T-cell (primary cell): ENCODE measurements at regions of chr3 and their contacts with region 1.

Region 1: DNA sequence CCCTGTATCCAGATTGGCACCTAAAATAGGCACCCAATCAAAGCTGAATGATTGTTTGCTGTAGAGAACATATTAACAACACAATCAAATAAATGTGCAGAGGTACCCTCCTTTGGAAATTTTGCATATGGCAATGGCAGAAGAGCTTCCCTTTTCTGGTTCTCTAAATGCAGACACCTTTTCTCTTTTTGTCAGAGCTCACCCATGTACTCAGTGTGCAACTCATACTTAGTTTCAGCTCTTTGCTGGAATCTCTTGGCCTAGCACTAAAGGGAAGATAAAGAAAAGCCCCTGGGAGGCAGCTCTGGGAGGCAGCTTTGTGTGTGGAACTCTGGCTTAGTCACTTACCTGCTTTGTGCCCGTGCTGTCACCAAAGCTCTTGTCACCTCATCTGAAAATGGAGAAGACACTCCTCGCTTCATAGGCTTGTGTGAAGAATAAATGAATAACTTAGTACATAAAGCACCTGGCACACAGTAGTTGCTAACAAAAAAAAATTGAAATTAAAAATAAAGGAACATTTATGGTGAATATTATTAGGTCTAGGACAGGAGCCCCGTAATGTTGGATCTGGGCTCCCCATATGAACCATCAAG is 28.8 kb downstream of the ST6GAL1 start:
- DNase-seq: no peak
- ATAC-seq: no peak
- H3K4me3 ChIP-seq: no peak overlapping the region
- H3K4me3 Mint-ChIP-seq: no peak overlapping the region
- H3K27ac ChIP-seq: no peak overlapping the region
- H3K27ac Mint-ChIP-seq: peak overlapping the region; percentile 5 to 52
- H3K4me1 ChIP-seq: peaks cover 0 to 36% of the 10 kb centered on the region in 2 experiments
- H3K4me1 Mint-ChIP-seq: peaks cover 65 to 85% (median 79%) of the 10 kb centered on the region in 3 donors
- H3K27me3 ChIP-seq: no peaks in the 10 kb centered on the region
- H3K27me3 Mint-ChIP-seq: no peaks in the 10 kb centered on the region

Region 2: GRCh38 chr3:187000711-187001151 is 41.6 kb after region 1 on chr3:
- CTCF ChIA-PET with region 1: no interaction called
- POLR2A ChIA-PET with region 1: interaction called in 1 of 2 experiments, 10 read pairs
- DNase-seq: peak in 1 of 35 experiments; percentile 11
- ATAC-seq: no peak
- H3K4me3 ChIP-seq: no peak overlapping the region
- H3K4me3 Mint-ChIP-seq: no peak overlapping the region
- H3K27ac ChIP-seq: peak overlapping the region; percentile 51
- H3K27ac Mint-ChIP-seq: peak overlapping the region; percentile 83 to 87
- H3K4me1 ChIP-seq: peaks cover 0 to 39% of the 10 kb centered on the region in 2 experiments
- H3K4me1 Mint-ChIP-seq: peaks cover 54 to 75% (median 74%) of the 10 kb centered on the region in 3 donors
- H3K27me3 ChIP-seq: no peaks in the 10 kb centered on the region
- H3K27me3 Mint-ChIP-seq: no peaks in the 10 kb centered on the region